PC-3 (cell line): ENCODE measurements at regions of chr14 and their contacts with region 1.

Region 1: DNA sequence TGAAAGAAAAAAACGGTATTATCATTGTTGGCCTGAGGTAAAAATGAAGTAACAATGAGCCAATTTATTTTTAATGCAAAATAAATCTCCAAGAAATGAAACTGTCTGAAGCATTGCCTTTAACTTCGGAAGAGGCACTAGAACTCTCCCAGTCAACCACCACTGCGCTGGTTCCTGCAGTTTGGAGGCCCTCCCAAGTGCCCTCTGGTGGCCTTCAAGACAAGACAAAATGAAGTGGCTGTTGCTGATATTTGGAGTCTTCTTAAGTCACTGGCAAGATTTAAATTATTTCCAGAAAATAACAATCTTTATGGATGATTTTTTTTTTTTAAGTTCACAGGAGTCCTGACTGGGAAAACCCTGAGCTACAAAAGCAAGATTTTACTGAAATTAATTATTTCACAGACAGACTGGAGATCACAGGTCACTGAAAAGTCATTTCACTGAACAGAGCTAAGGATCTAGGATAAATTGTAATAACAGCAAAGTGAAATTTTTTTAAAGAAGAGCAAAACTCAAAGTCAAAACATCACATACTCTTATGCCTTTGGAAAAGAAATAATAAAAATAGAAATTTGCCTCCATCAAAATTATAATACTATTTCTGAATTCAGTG is 58.2 kb downstream of the DICER1 start:
- DNase-seq: peak; percentile 65
- ATAC-seq: peak; percentile 76
- H3K4me3 ChIP-seq: no peak overlapping the region
- H3K27ac ChIP-seq: no peak overlapping the region
- H3K4me1 ChIP-seq: no peaks in the 10 kb centered on the region
- H3K27me3 ChIP-seq: no peaks in the 10 kb centered on the region
- CTCF ChIP-seq: peak; percentile 80

Region 2: DNA sequence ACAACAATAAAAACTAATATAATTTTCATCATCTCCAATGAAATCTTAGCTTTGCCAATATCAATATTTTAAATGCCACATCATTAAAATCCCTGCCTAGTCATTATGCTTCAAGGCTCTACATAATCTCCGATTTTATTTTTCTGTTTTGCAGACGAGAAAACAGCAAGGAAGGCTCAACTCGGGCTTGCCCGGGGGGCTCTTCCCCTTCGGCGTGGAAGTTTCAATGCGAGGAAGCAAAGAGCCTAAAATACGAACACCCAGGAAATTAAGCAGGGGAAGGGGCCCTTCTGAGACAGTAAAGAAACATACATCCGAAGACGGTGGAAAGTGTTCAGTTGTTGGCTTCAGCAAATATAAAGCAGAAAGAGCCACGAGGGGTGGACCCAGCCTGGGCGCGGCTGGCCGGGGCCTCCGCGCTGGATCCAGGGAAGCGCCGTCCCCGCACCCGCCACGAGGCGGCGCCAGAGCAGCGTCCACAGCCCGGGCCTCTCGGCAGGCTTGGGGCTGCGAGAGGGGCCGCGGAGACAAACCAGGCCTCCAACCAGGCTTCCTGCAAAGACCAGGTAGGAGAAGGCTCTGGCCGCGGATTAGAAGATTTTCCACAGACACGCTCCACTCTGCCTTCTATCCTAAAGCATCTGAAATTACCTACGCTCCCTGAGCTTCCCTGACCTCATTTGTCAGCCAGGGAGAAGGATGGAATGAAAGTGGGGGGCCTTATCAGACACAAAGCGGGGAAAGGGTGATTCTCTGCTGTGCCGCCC is 409.7 kb before region 1 on chr14:
- CTCF ChIA-PET with region 1: no interaction called
- POLR2A ChIA-PET with region 1: no interaction called
- intact Hi-C with region 1: loop called (anchors 5 kb)
- DNase-seq: peak; percentile 48
- ATAC-seq: peak; percentile 81
- H3K4me3 ChIP-seq: peak overlapping the region; percentile 50
- H3K27ac ChIP-seq: no peak overlapping the region
- H3K4me1 ChIP-seq: no peaks in the 10 kb centered on the region
- H3K27me3 ChIP-seq: no peaks in the 10 kb centered on the region
- CTCF ChIP-seq: peak; percentile 84

Region 3: DNA sequence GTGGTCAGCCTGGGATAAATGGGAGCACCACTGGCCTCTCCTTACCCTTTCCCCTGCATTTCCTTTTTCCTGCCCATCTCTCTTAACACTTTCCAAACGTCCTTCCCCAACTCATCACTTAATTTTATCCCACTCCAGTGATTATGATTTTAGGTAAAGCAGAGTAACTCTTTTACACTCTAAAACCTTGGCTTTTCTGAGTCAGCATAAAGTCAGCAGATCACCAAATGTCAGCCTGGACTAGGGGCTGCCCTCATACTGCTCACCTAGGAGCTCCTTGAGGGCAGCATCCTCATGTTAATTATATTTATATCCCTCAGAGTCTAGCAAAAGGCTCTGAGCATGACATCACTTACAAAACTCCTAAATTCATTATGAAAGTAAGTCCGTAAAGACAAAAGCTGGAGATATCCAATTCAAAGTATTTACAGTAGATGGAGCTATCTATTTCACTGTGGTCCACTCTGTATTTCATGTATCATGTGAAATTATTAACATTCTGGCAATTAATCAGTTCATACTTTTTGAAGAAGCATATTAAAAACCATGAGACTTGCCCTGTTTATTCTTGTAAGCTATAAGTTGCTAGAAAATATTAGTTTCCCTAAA is 75.2 kb after region 1 on chr14:
- CTCF ChIA-PET with region 1: no interaction called
- POLR2A ChIA-PET with region 1: no interaction called
- intact Hi-C with region 1: no loop called
- DNase-seq: peak; percentile 7
- ATAC-seq: no peak
- H3K4me3 ChIP-seq: no peak overlapping the region
- H3K27ac ChIP-seq: no peak overlapping the region
- H3K4me1 ChIP-seq: no peaks in the 10 kb centered on the region
- H3K27me3 ChIP-seq: no peaks in the 10 kb centered on the region
- CTCF ChIP-seq: peak; percentile 48

Region 4: DNA sequence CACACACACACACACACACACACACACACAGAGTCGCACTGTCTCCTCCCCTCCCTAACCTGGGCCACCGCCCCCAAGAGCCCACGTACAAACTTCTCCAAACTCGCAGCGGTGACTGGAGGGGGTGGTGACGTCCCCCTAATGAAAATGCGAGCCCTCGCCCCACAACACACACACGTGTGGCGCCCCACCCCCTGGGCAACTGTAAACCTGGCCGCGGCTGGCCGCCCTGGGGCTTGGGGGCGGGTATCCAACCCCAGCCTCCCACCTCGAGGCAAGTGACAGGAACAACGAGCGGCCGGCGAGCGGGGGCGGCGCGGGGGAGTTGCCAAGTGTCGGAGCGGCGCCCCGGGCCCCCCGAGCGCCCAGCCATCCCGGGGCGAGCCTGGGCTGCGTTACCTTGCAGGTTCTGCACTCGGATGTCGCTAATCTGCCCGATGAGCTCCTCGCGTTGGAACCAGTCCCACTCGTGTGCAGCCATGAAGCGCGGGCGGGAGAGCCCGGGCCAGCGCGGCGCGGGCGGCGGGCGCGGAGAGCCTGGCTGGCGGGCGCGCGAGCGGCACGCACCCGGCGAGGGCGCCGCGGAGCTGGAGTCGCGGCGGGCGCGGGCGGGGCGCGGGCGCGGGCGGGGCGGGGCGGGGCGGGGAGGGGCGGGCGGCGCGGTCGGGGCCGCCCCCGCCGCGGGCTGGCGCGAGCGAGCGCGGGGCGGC is 220.4 kb after region 1 on chr14 and contains the start of gene CLMN:
- CTCF ChIA-PET with region 1: no interaction called
- POLR2A ChIA-PET with region 1: no interaction called
- intact Hi-C with region 1: no loop called
- DNase-seq: peak; percentile 33
- ATAC-seq: peak; percentile 61
- H3K4me3 ChIP-seq: peak within 1 kb of the TSS; percentile 86
- H3K27ac ChIP-seq: no peak within 1 kb of the TSS
- H3K4me1 ChIP-seq: peaks cover 13% of the 10 kb centered on the region
- H3K27me3 ChIP-seq: no peaks in the 10 kb centered on the region
- CTCF ChIP-seq: no peak
- total RNA-seq, gene CLMN: 3.5 and 3.7 TPM in 2 replicates